Activated CD4-positive, alpha-beta memory T cell treated with anti-CD3 and anti-CD28 coated beads, Interleukin-2, amount 10 ng/mL, durations not matched to agents 7 days and 5 days (primary cell): ENCODE measurements at regions of chr17 and their contacts with region 1.

Region 1: GRCh38 chr17:68771867-68772515 is 170.8 kb upstream of the FAM20A start:
- DNase-seq: no peak
- H3K4me3 Mint-ChIP-seq: no peak overlapping the region
- H3K27ac Mint-ChIP-seq: no peak overlapping the region
- H3K4me1 Mint-ChIP-seq: no peaks in the 10 kb centered on the region
- H3K27me3 Mint-ChIP-seq: peaks cover 3% of the 10 kb centered on the region

Region 2: GRCh38 chr17:68658999-68659780 is 112.8 kb before region 1 on chr17:
- CTCF ChIA-PET with region 1: no interaction called
- POLR2A ChIA-PET with region 1: no interaction called
- DNase-seq: no peak
- H3K4me3 Mint-ChIP-seq: no peak overlapping the region
- H3K27ac Mint-ChIP-seq: no peak overlapping the region
- H3K4me1 Mint-ChIP-seq: no peaks in the 10 kb centered on the region
- H3K27me3 Mint-ChIP-seq: peaks cover 6% of the 10 kb centered on the region

Region 3: DNA sequence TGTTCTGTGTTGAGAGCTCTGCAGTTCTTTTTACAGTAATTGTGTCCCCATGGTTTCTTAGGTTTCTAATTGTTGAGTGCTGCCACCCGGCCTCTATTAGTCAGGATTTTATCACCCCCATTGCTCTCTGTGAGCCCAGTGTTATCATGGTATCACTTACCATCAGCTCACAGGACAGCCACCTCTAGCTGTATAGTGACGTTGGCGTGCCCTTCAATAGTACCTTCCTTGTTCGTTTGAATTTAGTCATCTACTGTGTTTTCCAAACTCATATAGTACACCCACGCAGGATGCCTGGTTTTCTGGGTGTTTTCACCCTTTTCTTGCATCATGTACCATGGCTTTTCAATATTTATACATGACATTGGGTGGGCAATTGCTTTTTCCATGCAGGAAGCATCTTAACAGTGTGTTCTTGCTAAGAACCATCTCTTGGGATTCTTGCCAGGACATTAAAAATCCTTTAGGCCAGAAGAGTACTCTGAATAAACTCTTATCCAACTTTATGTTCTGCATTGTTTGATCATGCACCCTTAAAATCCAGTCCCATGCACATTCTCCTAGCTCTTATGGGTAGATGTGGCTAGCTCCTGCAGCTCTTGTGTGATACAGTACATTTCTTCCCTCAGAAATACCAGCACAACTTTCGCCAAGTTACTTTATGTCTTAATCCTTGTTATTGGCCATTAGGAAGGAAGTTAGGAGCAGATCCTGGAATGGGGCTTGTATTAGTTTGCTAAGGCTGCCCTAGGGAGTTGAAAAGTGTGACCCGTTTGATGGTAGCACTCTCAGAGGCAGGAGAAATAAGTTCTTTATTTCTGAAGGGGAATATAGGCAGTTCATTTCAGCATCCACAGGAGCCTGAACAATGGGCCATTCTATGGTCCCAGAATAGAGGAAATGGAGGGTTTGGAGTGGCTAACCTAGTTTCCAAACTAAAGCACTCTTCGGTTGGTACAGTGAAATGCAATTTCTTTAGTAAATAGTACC is 467.9 kb after region 1 on chr17:
- CTCF ChIA-PET with region 1: interaction called, 13 read pairs
- POLR2A ChIA-PET with region 1: no interaction called
- DNase-seq: no peak
- H3K4me3 Mint-ChIP-seq: no peak overlapping the region
- H3K27ac Mint-ChIP-seq: no peak overlapping the region
- H3K4me1 Mint-ChIP-seq: no peaks in the 10 kb centered on the region
- H3K27me3 Mint-ChIP-seq: no peaks in the 10 kb centered on the region